ENCODE measurements at regions of chr4 and their contacts with region 1.

Region 1: GRCh38 chr4:112765317-112765975 is 128.5 kb downstream of the LARP7 start:
- DNase-seq: peak in 1 of 2 experiments; percentile 9
- H3K4me3 ChIP-seq: peak overlapping the region in 1 of 4 experiments; percentile 42; a peak in 2 of 8 replicates
- H3K27ac ChIP-seq: no peak overlapping the region
- H3K4me1 ChIP-seq: peaks cover 0 to 5% (median 3%) of the 10 kb centered on the region in 4 experiments; a peak in 3 of 7 replicates
- H3K27me3 ChIP-seq: no peaks in the 10 kb centered on the region
- CTCF ChIP-seq: peak in 2 of 3 experiments; percentile 68 to 79; a peak in 3 of 4 replicates
- EP300 ChIP-seq: no peak
- POLR2A ChIP-seq: no peak
- RAD21 ChIP-seq: peak; percentile 79 to 85

Region 2: DNA sequence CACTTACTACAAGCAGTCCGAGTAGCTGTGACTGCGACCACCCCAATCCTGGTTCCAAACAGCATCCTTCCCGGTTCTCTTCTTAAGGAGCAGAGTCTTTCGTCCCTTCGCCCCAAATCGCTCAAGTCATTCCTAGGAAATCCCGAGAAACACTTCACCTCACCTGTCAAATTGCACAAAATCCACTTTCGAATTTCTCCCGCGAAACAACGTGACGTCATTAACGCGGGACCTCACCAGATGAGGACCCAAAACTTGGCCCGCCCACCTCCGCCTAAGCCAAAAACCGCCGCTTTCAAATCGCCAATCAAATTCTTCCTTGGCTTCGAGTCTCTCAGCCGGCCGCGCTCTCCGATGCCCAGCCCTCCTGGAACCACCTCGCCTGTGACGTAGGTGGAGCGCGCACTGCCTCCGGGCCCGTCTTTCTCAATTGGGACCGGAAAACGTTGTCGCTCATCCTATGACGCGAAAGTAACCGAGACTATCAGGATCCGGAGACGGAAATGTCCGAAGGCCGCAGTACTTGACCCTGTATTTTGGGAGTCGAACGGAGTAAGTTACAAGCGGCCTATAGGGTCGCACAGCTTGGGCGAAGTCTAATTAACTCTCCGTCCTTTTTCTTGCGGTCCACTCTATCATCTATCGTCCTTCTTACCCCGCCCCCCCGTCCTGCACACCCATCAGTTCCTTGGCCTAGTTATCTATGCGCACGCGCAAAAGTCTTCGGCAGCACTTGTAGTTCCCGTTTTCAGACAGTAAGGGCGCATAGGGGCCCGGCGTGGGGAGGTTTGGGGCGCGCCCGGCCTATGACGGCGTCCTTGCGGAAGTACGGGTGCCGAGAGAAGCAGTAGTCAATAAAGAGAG is 128.5 kb before region 1 on chr4 and contains the starts of genes LARP7 and ZGRF1:
- CTCF ChIA-PET with region 1: interaction called, 58 read pairs
- POLR2A ChIA-PET with region 1: interaction called, 612 read pairs
- DNase-seq: peak; percentile 96 to 97
- H3K4me3 ChIP-seq: peak within 1 kb of the TSS; percentile 86 to 98 (median 96)
- H3K27ac ChIP-seq: peak within 1 kb of the TSS; percentile 95
- H3K4me1 ChIP-seq: peaks cover 0 to 9% (median 1%) of the 10 kb centered on the region in 4 experiments; a peak in 2 of 7 replicates
- H3K27me3 ChIP-seq: no peaks in the 10 kb centered on the region
- CTCF ChIP-seq: peak; percentile 66 to 83 (median 72)
- EP300 ChIP-seq: peak in 1 of 2 experiments; percentile 52; a peak in 1 of 3 replicates
- POLR2A ChIP-seq: peak in 1 of 2 experiments; percentile 67; a peak in 2 of 3 replicates
- RAD21 ChIP-seq: peak; percentile 66 to 67
- total RNA-seq, gene LARP7: 38.3 and 40.1 TPM in 2 replicates
- total RNA-seq, gene ZGRF1: 43.7 and 44.6 TPM in 2 replicates

Region 3: DNA sequence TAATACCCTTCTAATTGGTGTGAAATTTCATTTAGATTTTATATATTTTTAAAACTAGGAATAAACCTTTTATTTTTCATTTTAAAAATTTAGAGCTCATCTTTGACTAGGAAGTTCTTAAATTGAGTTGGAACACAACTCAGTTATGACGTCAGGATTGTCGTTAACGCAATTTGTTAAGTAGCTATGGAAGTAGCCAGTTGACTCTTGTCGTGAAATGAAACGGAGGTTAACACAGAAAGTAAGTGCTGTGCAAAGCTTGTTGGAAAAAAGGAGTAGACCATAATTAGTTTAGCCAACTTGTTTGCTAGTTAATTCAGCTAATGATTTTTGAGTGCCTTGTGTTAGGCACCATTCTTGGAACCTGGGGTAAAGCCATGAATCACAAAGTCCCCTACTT is 110.2 kb before region 1 on chr4:
- CTCF ChIA-PET with region 1: interaction called, 73 read pairs
- POLR2A ChIA-PET with region 1: interaction called, 71 read pairs
- DNase-seq: no peak
- H3K4me3 ChIP-seq: peak overlapping the region in 1 of 4 experiments; percentile 38; a peak in 1 of 8 replicates
- H3K27ac ChIP-seq: peak overlapping the region; percentile 39; the same call in 1 of the 2 replicates
- H3K4me1 ChIP-seq: peaks cover 0 to 27% (median 8%) of the 10 kb centered on the region in 4 experiments; a peak in 3 of 7 replicates
- H3K27me3 ChIP-seq: no peaks in the 10 kb centered on the region
- CTCF ChIP-seq: no peak
- EP300 ChIP-seq: no peak
- POLR2A ChIP-seq: no peak
- RAD21 ChIP-seq: no peak

Region 4: GRCh38 chr4:112680996-112681395 is 84.5 kb before region 1 on chr4:
- CTCF ChIA-PET with region 1: interaction called, 19 read pairs
- POLR2A ChIA-PET with region 1: no interaction called
- DNase-seq: no peak
- H3K4me3 ChIP-seq: no peak overlapping the region
- H3K27ac ChIP-seq: no peak overlapping the region
- H3K4me1 ChIP-seq: peaks cover 0 to 3% (median 0%) of the 10 kb centered on the region in 4 experiments; a peak in 3 of 7 replicates
- H3K27me3 ChIP-seq: no peaks in the 10 kb centered on the region
- CTCF ChIP-seq: no peak
- EP300 ChIP-seq: no peak
- POLR2A ChIP-seq: no peak
- RAD21 ChIP-seq: no peak

Region 5: DNA sequence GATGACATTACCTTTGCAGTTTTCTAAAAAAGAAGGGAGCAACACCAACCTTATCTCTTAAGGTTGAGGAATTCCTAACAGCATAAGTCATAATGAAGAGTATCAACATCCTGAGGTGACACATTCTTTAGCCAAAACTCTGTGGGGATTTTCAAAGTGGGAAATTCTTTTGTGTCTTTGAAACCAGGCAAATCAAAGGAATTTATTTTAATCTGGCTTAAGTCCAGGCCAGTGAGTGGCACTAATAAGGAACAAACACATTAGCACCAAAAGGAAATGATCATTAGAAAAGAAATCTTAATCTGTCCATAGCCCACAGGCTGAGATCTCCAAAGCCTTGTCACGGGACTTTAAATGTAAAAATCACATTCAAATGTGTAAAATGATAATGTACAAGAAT is 18.4 kb before region 1 on chr4:
- CTCF ChIA-PET with region 1: interaction called, 100 read pairs
- POLR2A ChIA-PET with region 1: interaction called, 90 read pairs
- DNase-seq: peak in 1 of 2 experiments; percentile 25
- H3K4me3 ChIP-seq: peak overlapping the region in 1 of 4 experiments; percentile 46; a peak in 1 of 8 replicates
- H3K27ac ChIP-seq: peak overlapping the region; percentile 42; the same call in 1 of the 2 replicates
- H3K4me1 ChIP-seq: peaks cover 4 to 21% (median 12%) of the 10 kb centered on the region in 4 experiments; a peak in 6 of 7 replicates
- H3K27me3 ChIP-seq: no peaks in the 10 kb centered on the region
- CTCF ChIP-seq: no peak
- EP300 ChIP-seq: no peak
- POLR2A ChIP-seq: no peak
- RAD21 ChIP-seq: no peak

Region 6: DNA sequence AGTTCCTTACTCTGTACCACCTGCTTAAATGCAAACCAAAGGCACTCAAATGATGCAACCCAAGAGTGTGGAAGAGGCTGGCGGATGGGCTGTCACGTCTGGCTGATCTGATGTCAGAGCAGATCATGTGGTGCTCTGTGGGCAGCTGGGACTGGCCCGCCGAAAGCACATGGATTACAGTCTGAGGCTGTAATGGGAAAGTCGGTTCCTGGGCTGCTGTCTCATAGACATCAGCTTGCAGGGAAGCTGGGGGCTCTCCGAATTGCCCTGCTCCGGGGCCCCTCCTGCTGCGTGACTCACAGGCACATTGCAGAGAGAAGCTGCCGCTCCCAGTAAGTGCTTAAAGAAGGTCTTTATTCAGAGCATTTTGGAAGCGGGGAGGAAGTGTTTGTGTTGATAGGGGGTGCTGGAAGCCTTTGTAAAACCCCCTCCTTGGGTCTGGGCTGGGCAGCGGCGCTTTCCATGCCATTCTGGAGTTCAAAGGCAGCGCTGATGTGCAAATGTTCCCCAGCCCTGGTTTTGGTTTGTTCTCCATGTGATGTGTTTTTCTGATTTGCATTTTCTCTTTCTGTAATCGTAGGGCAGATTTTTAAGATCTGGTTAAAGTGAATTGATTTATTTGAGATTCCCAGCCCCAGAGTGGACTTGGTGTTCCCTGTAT is 52.6 kb after region 1 on chr4:
- CTCF ChIA-PET with region 1: interaction called, 12 read pairs
- POLR2A ChIA-PET with region 1: no interaction called
- DNase-seq: peak; percentile 78 to 81
- H3K4me3 ChIP-seq: peak overlapping the region; percentile 32 to 54 (median 43); a peak in 7 of 8 replicates
- H3K27ac ChIP-seq: no peak overlapping the region
- H3K4me1 ChIP-seq: peaks cover 0 to 11% (median 0%) of the 10 kb centered on the region in 4 experiments; a peak in 2 of 7 replicates
- H3K27me3 ChIP-seq: no peaks in the 10 kb centered on the region
- CTCF ChIP-seq: no peak
- EP300 ChIP-seq: no peak
- POLR2A ChIP-seq: no peak
- RAD21 ChIP-seq: peak; percentile 29 to 42; a peak in 3 of 4 replicates

Region 7: DNA sequence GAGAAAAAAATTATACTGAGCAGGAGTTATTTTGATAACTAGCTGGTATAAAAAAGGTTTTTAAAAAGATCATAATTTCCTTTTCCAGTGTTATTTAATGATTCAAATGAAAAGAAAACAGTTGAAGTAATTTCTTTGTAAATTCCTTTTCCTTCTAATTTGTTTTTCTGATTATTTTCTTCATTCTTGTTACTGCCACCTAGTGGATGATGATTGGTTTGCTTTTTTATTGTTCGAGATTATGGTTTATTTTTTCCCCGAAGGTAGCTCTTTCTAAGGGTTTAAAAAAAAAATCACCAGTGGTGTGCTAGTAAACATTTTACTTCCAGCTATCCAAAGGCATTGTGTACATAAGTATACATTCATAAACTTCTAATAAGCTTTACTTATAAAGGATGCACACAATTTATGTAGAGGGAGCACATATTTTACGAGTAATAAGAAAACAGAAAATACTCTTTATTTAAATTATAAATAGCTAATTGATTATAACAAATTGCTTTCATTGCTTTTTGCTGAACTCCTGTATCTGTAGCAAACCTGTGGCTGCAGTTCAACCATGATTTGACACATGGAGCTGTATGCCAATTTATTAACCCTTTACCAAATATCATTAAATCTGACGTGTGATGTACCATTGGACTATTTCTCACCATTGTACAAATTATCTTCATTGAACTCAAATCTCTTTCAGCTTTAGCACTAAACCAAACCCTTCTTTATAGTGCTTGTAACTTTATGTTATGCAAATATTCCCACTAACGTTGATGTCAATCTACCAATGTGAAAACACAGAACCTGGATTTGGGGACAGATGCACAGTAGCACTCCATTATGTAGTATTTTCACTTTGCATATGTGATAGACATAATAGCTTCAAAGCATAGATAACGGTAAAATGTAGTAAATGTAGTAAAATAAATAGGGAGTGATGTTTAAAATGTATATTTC is 186.2 kb after region 1 on chr4:
- CTCF ChIA-PET with region 1: interaction called, 13 read pairs
- POLR2A ChIA-PET with region 1: no interaction called
- DNase-seq: no peak
- H3K4me3 ChIP-seq: no peak overlapping the region
- H3K27ac ChIP-seq: no peak overlapping the region
- H3K4me1 ChIP-seq: no peaks in the 10 kb centered on the region
- H3K27me3 ChIP-seq: no peaks in the 10 kb centered on the region
- CTCF ChIP-seq: peak in 2 of 3 experiments; percentile 3 to 35; a peak in 2 of 4 replicates
- EP300 ChIP-seq: no peak
- POLR2A ChIP-seq: no peak
- RAD21 ChIP-seq: peak in 1 of 2 experiments; percentile 24; a peak in 2 of 4 replicates